Endothelial cell of umbilical vein (primary cell): ENCODE measurements at regions of chr2 and their contacts with region 1.

Region 1: GRCh38 chr2:160582490-160583145 is 89.0 kb upstream of the RBMS1 start:
- DNase-seq: no peak
- H3K4me3 ChIP-seq: no peak overlapping the region
- H3K27ac ChIP-seq: no peak overlapping the region
- H3K4me1 ChIP-seq: no peaks in the 10 kb centered on the region
- H3K27me3 ChIP-seq: no peaks in the 10 kb centered on the region
- CTCF ChIP-seq: no peak
- POLR2A ChIP-seq: no peak

Region 2: GRCh38 chr2:160918906-160919503 is 336.4 kb after region 1 on chr2:
- CTCF ChIA-PET with region 1: interaction called, 11 read pairs
- POLR2A ChIA-PET with region 1: no interaction called
- dilution Hi-C with region 1: no loop called
- intact Hi-C with region 1: loop called (anchors 10 kb)
- DNase-seq: peak; percentile 68
- H3K4me3 ChIP-seq: no peak overlapping the region
- H3K27ac ChIP-seq: no peak overlapping the region
- H3K4me1 ChIP-seq: peaks cover 11% of the 10 kb centered on the region
- H3K27me3 ChIP-seq: no peaks in the 10 kb centered on the region
- CTCF ChIP-seq: peak; percentile 68 to 73
- POLR2A ChIP-seq: no peak